IMR-90 (cell line): ENCODE measurements at regions of chr3 and their contacts with region 1.

Region 1: GRCh38 chr3:66816090-66816761 is 181.9 kb upstream of the KBTBD8 start:
- DNase-seq: peak; percentile 83
- ATAC-seq: peak; percentile 91
- H3K4me3 ChIP-seq: no peak overlapping the region
- H3K27ac ChIP-seq: no peak overlapping the region
- H3K4me1 ChIP-seq: no peaks in the 10 kb centered on the region
- H3K27me3 ChIP-seq: peaks cover 5% of the 10 kb centered on the region
- CTCF ChIP-seq: peak; percentile 73
- POLR2A ChIP-seq: no peak
- RAD21 ChIP-seq: peak; percentile 92

Region 2: GRCh38 chr3:66253790-66254620 is 562.2 kb before region 1 on chr3:
- CTCF ChIA-PET with region 1: interaction called, 25 read pairs
- POLR2A ChIA-PET with region 1: no interaction called
- dilution Hi-C with region 1: no loop called
- in situ Hi-C with region 1: no loop called
- intact Hi-C with region 1: loop called (anchors 2 kb)
- DNase-seq: peak; percentile 67
- ATAC-seq: peak; percentile 70
- H3K4me3 ChIP-seq: no peak overlapping the region
- H3K27ac ChIP-seq: no peak overlapping the region
- H3K4me1 ChIP-seq: peaks cover 12% of the 10 kb centered on the region
- H3K27me3 ChIP-seq: no peaks in the 10 kb centered on the region
- CTCF ChIP-seq: peak; percentile 75
- POLR2A ChIP-seq: no peak
- RAD21 ChIP-seq: peak; percentile 77

Region 3: DNA sequence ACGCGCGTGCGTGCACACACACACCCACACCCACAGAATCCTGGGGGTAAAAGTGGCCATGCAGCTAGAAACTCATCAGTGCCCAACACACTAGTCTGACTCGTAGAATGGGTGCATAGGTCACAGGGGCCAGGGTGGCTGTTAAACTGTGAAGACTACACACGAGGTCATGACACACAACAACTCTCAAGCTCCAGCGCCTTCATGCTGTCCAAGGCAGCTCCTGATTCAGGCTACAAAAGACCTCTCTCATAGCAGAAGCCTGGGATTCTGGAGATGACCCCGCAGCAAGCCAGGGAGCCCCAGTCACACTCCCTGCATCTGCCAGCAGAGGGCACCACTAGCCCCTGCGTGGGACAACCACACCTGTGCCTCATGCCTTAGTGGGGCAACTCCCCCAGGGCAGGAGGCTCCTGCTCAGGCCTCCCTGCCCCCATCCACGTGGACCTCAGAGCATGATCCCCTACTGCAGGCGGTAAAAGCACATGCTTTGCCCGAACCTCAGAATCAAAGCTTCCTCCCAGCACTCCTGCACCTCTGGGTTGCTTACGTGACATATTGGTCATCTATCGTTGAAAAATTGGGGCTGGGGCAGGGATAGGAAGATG is 408.5 kb before region 1 on chr3:
- CTCF ChIA-PET with region 1: interaction called, 7 read pairs
- POLR2A ChIA-PET with region 1: no interaction called
- dilution Hi-C with region 1: no loop called
- in situ Hi-C with region 1: loop called (anchors 5 kb)
- intact Hi-C with region 1: loop called (anchors 1 kb)
- DNase-seq: peak; percentile 55
- ATAC-seq: peak; percentile 50; the same call in 1 of the 2 replicates
- H3K4me3 ChIP-seq: no peak overlapping the region
- H3K27ac ChIP-seq: no peak overlapping the region
- H3K4me1 ChIP-seq: peaks cover 25% of the 10 kb centered on the region
- H3K27me3 ChIP-seq: no peaks in the 10 kb centered on the region
- CTCF ChIP-seq: peak; percentile 80
- POLR2A ChIP-seq: no peak
- RAD21 ChIP-seq: peak; percentile 91

Region 4: DNA sequence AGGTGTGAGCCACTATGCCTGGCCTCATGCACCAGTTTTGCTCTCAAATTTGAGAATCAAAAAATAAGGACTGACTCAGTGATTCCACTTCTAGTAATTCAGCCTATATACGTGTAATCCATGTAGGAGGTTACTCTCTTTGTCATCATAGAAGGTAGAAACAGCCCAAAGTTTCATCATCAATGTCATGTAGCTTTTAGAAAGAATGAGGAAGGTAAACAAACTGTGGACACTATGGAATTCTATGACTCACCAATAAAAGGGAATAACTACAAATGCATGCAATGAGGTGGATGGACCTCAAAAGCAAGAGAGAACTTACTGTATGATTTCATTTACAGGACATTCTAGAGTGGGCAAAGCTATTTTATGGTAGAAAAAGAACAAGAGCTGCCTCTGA is 222.3 kb before region 1 on chr3:
- CTCF ChIA-PET with region 1: interaction called, 5 read pairs
- POLR2A ChIA-PET with region 1: no interaction called
- dilution Hi-C with region 1: no loop called
- in situ Hi-C with region 1: no loop called
- intact Hi-C with region 1: loop called (anchors 10 kb)
- DNase-seq: peak; percentile 99
- ATAC-seq: peak; percentile 68
- H3K4me3 ChIP-seq: no peak overlapping the region
- H3K27ac ChIP-seq: peak overlapping the region; percentile 57
- H3K4me1 ChIP-seq: peaks cover 12% of the 10 kb centered on the region
- H3K27me3 ChIP-seq: no peaks in the 10 kb centered on the region
- CTCF ChIP-seq: no peak
- POLR2A ChIP-seq: no peak
- RAD21 ChIP-seq: peak; percentile 1; the same call in 1 of the 2 replicates

Region 5: DNA sequence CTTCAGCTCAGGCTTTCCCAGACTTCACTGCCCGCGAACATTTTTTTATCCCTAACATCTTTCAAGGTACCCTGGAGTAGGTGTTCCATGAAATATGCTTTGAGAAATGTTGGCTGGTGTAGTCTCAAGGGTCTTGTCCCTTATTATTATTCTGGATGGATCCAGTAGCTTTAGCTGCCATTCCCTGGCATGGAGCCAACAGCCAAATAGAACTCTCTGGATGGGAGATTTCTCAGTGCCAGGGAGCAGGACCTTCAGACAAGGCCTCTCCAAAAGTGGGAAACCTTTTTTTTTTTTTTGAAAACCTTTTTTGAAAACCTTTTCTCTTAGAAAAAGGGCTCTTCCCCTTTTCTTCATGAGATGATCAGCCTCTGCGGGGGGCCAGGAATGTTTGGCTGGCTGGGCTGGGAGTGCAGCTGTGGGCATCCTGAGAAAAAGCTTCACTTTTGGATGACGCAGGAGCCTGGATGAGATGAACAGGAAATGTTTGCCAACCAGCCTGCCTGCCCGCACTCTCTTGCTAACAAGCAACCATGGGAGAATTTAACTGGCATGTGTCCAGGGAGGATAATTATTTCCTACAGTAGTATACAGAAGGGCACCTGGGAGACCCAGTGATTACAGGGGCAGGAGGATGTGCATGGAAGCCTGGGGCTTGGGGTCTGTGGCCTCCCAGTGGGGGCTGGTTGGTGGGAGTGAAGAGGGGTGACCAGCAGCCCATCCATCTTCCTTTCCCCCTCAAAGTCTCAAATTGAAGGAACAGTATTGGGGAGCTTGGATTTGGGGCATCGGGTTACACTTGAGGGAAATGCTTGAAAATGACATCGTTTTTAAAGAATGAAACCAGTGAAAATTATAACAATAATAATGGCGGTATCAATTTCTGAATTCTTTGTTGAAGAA is 206.3 kb before region 1 on chr3:
- CTCF ChIA-PET with region 1: no interaction called
- POLR2A ChIA-PET with region 1: no interaction called
- dilution Hi-C with region 1: no loop called
- in situ Hi-C with region 1: no loop called
- intact Hi-C with region 1: no loop called
- DNase-seq: peak; percentile 90
- ATAC-seq: peak; percentile 70
- H3K4me3 ChIP-seq: no peak overlapping the region
- H3K27ac ChIP-seq: peak overlapping the region; percentile 57
- H3K4me1 ChIP-seq: peaks cover 3% of the 10 kb centered on the region
- H3K27me3 ChIP-seq: no peaks in the 10 kb centered on the region
- CTCF ChIP-seq: no peak
- POLR2A ChIP-seq: no peak
- RAD21 ChIP-seq: no peak

Region 6: GRCh38 chr3:66675366-66675765 is 140.9 kb before region 1 on chr3:
- CTCF ChIA-PET with region 1: no interaction called
- POLR2A ChIA-PET with region 1: no interaction called
- dilution Hi-C with region 1: no loop called
- in situ Hi-C with region 1: no loop called
- intact Hi-C with region 1: no loop called
- DNase-seq: peak; percentile 74
- ATAC-seq: peak; percentile 29; the same call in 1 of the 2 replicates
- H3K4me3 ChIP-seq: no peak overlapping the region
- H3K27ac ChIP-seq: no peak overlapping the region
- H3K4me1 ChIP-seq: peaks cover 3% of the 10 kb centered on the region; the same call in 1 of the 2 replicates
- H3K27me3 ChIP-seq: no peaks in the 10 kb centered on the region
- CTCF ChIP-seq: no peak
- POLR2A ChIP-seq: no peak
- RAD21 ChIP-seq: no peak